CD8-positive, alpha-beta T cell (primary cell): ENCODE measurements at regions of chr19 and their contacts with region 1.

Region 1: DNA sequence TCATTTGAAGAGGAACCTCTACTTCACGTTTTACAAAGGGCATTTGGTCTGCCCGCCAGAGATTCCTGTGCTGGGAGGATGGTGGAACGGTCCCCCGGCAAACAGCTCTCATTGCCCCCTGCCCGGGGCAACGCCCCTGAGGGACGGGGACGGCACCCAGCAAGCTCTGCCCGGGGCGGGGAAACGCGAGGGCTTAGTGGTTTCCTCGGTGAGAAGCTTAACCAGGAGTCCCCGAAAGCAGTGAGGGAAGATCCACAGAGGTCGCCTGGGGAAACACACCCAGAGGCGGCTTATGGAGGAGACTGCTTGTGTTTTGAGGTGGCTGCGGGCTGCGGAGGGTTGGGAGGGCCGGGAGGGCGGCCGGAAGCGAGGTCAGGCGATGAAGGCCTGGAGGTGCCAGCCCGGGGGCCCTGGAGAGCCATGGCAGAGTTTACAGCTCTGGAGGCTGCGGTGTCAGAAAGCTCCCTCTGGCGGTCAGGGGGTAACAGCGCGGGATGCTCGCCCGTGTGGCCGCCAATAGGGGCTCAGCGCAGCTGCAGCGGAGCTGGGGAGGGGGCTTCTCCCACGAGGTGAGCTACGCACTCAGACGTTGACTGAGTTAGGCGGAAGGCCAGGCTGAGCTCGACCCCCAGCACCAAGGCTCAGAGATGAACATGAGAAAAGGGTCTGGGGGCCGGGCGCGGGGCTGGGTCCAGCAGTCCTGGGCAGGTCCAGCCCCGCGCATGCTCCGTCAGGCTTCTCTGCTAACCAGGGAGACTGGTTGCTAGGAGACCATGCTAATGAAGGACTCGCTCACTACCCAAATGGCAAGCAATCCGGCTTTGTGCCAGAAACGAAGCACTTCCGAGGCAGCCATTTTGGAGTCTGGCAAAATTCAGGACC is 652 bp upstream of the TPGS1 start:
- DNase-seq: peak; percentile 83 to 98 (median 94)
- ATAC-seq: peak; percentile 49
- H3K4me3 ChIP-seq: peak overlapping the region; percentile 69 to 80
- H3K4me3 Mint-ChIP-seq: peak overlapping the region; percentile 96
- H3K27ac ChIP-seq: peak overlapping the region; percentile 87 to 98
- H3K27ac Mint-ChIP-seq: peak overlapping the region; percentile 98
- H3K4me1 ChIP-seq: peaks cover 42% of the 10 kb centered on the region
- H3K4me1 Mint-ChIP-seq: peaks cover 41% of the 10 kb centered on the region
- H3K27me3 ChIP-seq: no peaks in the 10 kb centered on the region
- H3K27me3 Mint-ChIP-seq: no peaks in the 10 kb centered on the region
- CTCF ChIP-seq: peak; percentile 93

Region 2: DNA sequence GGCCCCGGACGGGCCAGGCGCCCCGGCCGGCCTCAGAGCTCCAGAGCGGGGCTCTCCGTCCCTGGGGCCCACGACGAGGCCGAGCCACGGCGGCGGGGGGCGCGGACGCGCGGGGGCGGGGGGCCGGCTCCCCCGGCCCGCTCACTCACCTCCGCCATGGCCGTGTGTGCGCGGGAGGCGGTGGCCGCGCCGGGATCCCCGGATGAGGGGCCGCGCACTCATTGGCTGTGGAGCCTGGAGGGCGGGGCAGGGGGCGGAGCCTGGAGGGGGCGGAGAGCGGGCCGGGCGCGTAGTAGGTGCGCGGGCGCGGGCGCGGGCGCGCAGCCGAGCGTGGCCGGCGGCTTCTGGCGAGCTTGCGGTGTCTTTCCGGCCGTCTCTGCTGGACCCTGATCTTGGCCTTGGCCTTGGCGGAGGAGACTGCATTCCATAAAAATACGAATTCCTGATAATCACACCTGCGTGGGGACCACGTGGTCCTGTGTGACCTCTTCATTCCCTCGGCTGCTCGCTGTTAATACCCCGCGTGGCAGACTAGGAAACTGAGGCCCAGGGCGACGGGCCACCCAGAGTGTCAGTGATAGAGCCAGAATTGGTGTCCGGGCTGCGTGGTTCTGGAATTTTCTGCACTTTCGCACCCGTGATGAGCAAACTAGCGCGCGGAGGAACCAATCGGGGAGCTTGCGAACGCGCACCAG is 161.9 kb before region 1 on chr19 and contains the start of gene MIER2:
- CTCF ChIA-PET with region 1: no interaction called
- POLR2A ChIA-PET with region 1: interaction called, 3 read pairs
- intact Hi-C with region 1: loop called (anchors 1 kb)
- DNase-seq: peak; percentile 77 to 97 (median 89)
- ATAC-seq: peak; percentile 94
- H3K4me3 ChIP-seq: peak within 1 kb of the TSS; percentile 66 to 69
- H3K4me3 Mint-ChIP-seq: peak within 1 kb of the TSS; percentile 85
- H3K27ac ChIP-seq: peak within 1 kb of the TSS; percentile 8 to 49
- H3K27ac Mint-ChIP-seq: peak within 1 kb of the TSS; percentile 76
- H3K4me1 ChIP-seq: peaks cover 30% of the 10 kb centered on the region
- H3K4me1 Mint-ChIP-seq: peaks cover 49% of the 10 kb centered on the region
- H3K27me3 ChIP-seq: no peaks in the 10 kb centered on the region
- H3K27me3 Mint-ChIP-seq: peaks cover 3% of the 10 kb centered on the region
- CTCF ChIP-seq: no peak
- total RNA-seq, gene MIER2: 10.5 to 11.0 TPM

Region 3: GRCh38 chr19:495402-496186 is 11.1 kb before region 1 on chr19:
- CTCF ChIA-PET with region 1: interaction called, 20 read pairs
- POLR2A ChIA-PET with region 1: interaction called, 5 read pairs
- intact Hi-C with region 1: no loop called
- DNase-seq: peak in 7 of 9 experiments; percentile 27 to 63 (median 48)
- ATAC-seq: peak; percentile 59
- H3K4me3 ChIP-seq: no peak overlapping the region
- H3K4me3 Mint-ChIP-seq: no peak overlapping the region
- H3K27ac ChIP-seq: no peak overlapping the region
- H3K27ac Mint-ChIP-seq: no peak overlapping the region
- H3K4me1 ChIP-seq: peaks cover 12% of the 10 kb centered on the region
- H3K4me1 Mint-ChIP-seq: peaks cover 9% of the 10 kb centered on the region
- H3K27me3 ChIP-seq: peaks cover 11 to 23% of the 10 kb centered on the region in 2 experiments
- H3K27me3 Mint-ChIP-seq: peaks cover 18% of the 10 kb centered on the region
- CTCF ChIP-seq: peak; percentile 66

Region 4: GRCh38 chr19:531009-531752 is 24.5 kb after region 1 on chr19:
- CTCF ChIA-PET with region 1: interaction called, 38 read pairs
- POLR2A ChIA-PET with region 1: interaction called, 22 read pairs
- intact Hi-C with region 1: loop called (anchors 1 kb)
- DNase-seq: peak; percentile 79 to 93 (median 85)
- ATAC-seq: peak; percentile 80
- H3K4me3 ChIP-seq: peak overlapping the region; percentile 64 to 87
- H3K4me3 Mint-ChIP-seq: peak overlapping the region; percentile 82
- H3K27ac ChIP-seq: peak overlapping the region; percentile 73 to 74
- H3K27ac Mint-ChIP-seq: peak overlapping the region; percentile 87
- H3K4me1 ChIP-seq: peaks cover 20% of the 10 kb centered on the region
- H3K4me1 Mint-ChIP-seq: peaks cover 14% of the 10 kb centered on the region
- H3K27me3 ChIP-seq: no peaks in the 10 kb centered on the region
- H3K27me3 Mint-ChIP-seq: peaks cover 7% of the 10 kb centered on the region
- CTCF ChIP-seq: no peak

Region 5: DNA sequence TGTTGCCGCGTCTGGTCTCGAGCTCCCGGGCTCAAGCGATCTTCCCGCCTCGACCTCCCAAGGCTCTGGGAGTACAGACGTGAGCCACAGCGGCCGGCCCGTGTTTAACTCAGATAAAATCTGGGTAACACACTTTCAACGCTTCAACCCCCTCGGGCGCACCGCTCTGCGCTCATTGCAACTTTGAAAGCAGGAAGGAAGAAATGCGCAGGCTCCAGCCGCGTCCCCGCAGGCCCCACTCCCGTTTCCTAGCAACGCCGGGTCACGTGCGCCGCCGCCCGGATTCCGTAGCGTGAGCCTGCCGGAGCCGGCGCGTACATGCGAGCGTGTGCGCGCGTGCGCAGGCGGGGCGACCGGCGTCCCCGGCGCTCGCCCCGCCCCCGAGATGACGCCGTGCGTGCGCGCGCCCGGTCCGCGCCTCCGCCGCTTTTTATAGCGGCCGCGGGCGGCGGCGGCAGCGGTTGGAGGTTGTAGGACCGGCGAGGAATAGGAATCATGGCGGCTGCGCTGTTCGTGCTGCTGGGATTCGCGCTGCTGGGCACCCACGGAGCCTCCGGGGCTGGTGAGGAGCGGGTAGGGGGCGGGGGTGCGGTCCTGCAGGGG is 65.6 kb after region 1 on chr19 and contains the start of gene BSG:
- CTCF ChIA-PET with region 1: interaction called, 4 read pairs
- POLR2A ChIA-PET with region 1: interaction called, 5 read pairs
- intact Hi-C with region 1: loop called (anchors 1 kb)
- DNase-seq: peak; percentile 96 to 100 (median 99)
- ATAC-seq: peak; percentile 79
- H3K4me3 ChIP-seq: peak within 1 kb of the TSS; percentile 85 to 98
- H3K4me3 Mint-ChIP-seq: peak within 1 kb of the TSS; percentile 89
- H3K27ac ChIP-seq: peak within 1 kb of the TSS; percentile 86 to 90
- H3K27ac Mint-ChIP-seq: peak within 1 kb of the TSS; percentile 96
- H3K4me1 ChIP-seq: peaks cover 26% of the 10 kb centered on the region
- H3K4me1 Mint-ChIP-seq: peaks cover 38% of the 10 kb centered on the region
- H3K27me3 ChIP-seq: no peaks in the 10 kb centered on the region
- H3K27me3 Mint-ChIP-seq: no peaks in the 10 kb centered on the region
- CTCF ChIP-seq: no peak
- total RNA-seq, gene BSG: 76.2 to 81.2 TPM

Region 6: DNA sequence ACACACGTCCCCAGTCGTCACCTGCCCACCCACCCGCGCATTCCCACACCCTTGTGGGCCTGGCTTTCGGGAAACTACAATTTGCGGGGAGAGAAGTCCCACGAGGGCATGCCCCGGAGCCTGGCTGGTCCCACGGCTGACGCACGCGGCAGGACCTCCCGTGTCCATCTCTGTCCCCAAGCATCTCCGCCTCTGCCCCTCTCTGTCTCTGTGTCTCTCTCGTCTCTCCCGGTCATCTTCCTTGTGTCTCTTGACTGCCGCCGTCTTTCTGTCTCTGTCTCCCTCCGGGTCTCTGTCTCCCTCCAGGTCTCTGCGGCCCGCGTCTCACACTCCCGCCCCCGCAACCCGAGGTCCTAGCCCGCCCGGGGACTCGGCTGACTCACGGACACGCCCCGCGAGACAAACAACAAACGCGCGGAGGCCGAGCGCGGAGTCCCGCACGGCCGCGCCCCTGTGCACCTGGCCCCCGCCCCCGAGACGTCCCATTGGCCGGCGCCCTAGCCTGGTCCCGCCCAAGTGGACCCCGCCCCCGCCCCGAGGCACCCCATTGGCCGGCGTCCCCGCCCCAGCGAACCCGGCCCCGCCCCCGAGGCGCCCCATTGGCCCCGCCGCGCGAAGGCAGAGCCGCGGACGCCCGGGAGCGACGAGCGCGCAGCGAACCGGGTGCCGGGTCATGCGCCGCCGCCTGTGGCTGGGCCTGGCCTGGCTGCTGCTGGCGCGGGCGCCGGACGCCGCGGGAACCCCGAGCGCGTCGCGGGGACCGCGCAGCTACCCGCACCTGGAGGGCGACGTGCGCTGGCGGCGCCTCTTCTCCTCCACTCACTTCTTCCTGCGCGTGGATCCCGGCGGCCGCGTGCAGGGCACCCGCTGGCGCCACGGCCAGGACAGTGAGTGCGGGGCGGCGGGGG is 132.9 kb after region 1 on chr19 and contains the start of gene FGF22:
- CTCF ChIA-PET with region 1: interaction called, 3 read pairs
- POLR2A ChIA-PET with region 1: no interaction called
- intact Hi-C with region 1: loop called in 1 of 2 experiments (anchors 5 kb)
- DNase-seq: peak; percentile 91 to 98 (median 96)
- ATAC-seq: peak; percentile 96
- H3K4me3 ChIP-seq: peak within 1 kb of the TSS; percentile 53 to 61
- H3K4me3 Mint-ChIP-seq: peak within 1 kb of the TSS; percentile 84
- H3K27ac ChIP-seq: peak within 1 kb of the TSS in 1 of 2 experiments; percentile 14
- H3K27ac Mint-ChIP-seq: peak within 1 kb of the TSS; percentile 93
- H3K4me1 ChIP-seq: peaks cover 13% of the 10 kb centered on the region
- H3K4me1 Mint-ChIP-seq: peaks cover 9% of the 10 kb centered on the region
- H3K27me3 ChIP-seq: no peaks in the 10 kb centered on the region
- H3K27me3 Mint-ChIP-seq: no peaks in the 10 kb centered on the region
- CTCF ChIP-seq: no peak
- total RNA-seq, gene FGF22: 0.65 to 0.97 TPM

Region 7: GRCh38 chr19:850221-850978 is 343.8 kb after region 1 on chr19:
- CTCF ChIA-PET with region 1: no interaction called
- POLR2A ChIA-PET with region 1: no interaction called
- intact Hi-C with region 1: no loop called
- DNase-seq: peak in 1 of 9 experiments; percentile 21
- ATAC-seq: no peak
- H3K4me3 ChIP-seq: no peak overlapping the region
- H3K4me3 Mint-ChIP-seq: no peak overlapping the region
- H3K27ac ChIP-seq: no peak overlapping the region
- H3K27ac Mint-ChIP-seq: no peak overlapping the region
- H3K4me1 ChIP-seq: no peaks in the 10 kb centered on the region
- H3K4me1 Mint-ChIP-seq: no peaks in the 10 kb centered on the region
- H3K27me3 ChIP-seq: peaks cover 0 to 16% of the 10 kb centered on the region in 2 experiments
- H3K27me3 Mint-ChIP-seq: peaks cover 27% of the 10 kb centered on the region
- CTCF ChIP-seq: no peak